ENCODE measurements at regions of chr1 and their contacts with region 1.

Region 1: GRCh38 chr1:146007506-146008133 is 11.2 kb upstream of the TXNIP start:
- DNase-seq: no peak
- ATAC-seq: no peak
- H3K4me3 Mint-ChIP-seq: peak overlapping the region; percentile 50
- H3K27ac Mint-ChIP-seq: peak overlapping the region; percentile 87
- H3K4me1 Mint-ChIP-seq: peaks cover 41% of the 10 kb centered on the region
- H3K27me3 Mint-ChIP-seq: no peaks in the 10 kb centered on the region
- CTCF ChIP-seq: no peak

Region 2: GRCh38 chr1:145912128-145912641 is 95.4 kb before region 1 on chr1:
- CTCF ChIA-PET with region 1: interaction called, 4 read pairs
- POLR2A ChIA-PET with region 1: no interaction called
- intact Hi-C with region 1: loop called (anchors 5 kb)
- DNase-seq: no peak
- ATAC-seq: no peak
- H3K4me3 Mint-ChIP-seq: no peak overlapping the region
- H3K27ac Mint-ChIP-seq: peak overlapping the region; percentile 31
- H3K4me1 Mint-ChIP-seq: peaks cover 23% of the 10 kb centered on the region
- H3K27me3 Mint-ChIP-seq: no peaks in the 10 kb centered on the region
- CTCF ChIP-seq: no peak

Measured in activated CD8-positive, alpha-beta T cell treated with anti-CD3 and anti-CD28 coated beads for 36 hours (primary cell).